AG04450 (cell line): ENCODE measurements at regions of chr22 and their contacts with region 1.

Region 1: GRCh38 chr22:28442264-28442710 is 237.4 kb downstream of the TTC28 start:
- DNase-seq: no peak
- H3K4me3 ChIP-seq: peak overlapping the region; percentile 65
- H3K27ac ChIP-seq: peak overlapping the region; percentile 81
- H3K27me3 ChIP-seq: no peaks in the 10 kb centered on the region
- CTCF ChIP-seq: peak; percentile 81

Region 2: DNA sequence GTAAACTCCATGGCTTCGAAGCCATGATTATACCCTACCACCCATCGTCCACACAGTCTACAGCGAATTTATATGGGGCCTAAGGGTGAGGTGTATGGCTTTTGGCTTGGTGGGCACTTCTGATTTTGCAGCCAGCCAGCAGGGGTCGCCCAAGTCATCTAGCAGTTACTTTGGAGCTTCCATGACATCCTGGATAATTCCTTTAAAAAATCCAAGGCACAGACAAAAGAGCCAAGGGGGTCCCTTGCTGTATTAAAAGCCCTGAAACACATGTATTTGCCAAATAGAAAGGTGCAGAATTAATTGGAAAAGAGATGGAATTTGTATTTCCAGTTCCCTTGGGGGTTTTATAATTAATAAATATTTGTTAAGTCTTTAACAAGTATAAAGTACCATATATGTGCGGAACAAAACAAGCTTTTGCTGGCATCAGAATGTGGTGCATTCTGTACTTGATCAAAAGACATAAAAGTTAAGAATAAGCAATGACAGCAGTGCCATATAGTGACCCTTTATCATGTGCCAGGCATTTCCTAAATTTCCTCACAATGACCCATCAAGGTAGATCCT is 390.4 kb before region 1 on chr22:
- CTCF ChIA-PET with region 1: interaction called, 14 read pairs
- POLR2A ChIA-PET with region 1: interaction called, 3 read pairs
- DNase-seq: no peak
- H3K4me3 ChIP-seq: no peak overlapping the region
- H3K27ac ChIP-seq: no peak overlapping the region
- H3K27me3 ChIP-seq: no peaks in the 10 kb centered on the region
- CTCF ChIP-seq: peak; percentile 97

Region 3: DNA sequence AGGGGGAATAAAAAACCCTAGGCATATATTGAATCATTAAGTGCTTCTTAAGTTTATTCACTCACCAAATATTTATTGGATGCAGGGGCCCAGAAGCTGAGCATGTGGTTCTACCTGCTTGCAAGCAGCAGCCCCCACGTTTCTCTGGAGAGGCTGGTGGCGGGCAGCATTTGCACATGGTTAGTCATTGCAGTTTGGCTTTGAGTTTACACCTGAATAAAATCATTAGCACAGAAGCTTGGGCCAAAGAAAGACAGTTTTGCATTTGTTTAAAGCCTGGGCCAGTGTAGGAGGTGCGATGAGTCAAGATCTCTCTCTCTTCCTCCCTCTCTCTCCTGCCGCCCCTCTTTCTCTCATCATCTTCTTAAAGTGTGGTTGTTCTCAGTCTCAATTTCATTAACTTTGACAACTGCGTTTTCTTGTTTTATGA is 546.8 kb after region 1 on chr22:
- CTCF ChIA-PET with region 1: interaction called, 11 read pairs
- POLR2A ChIA-PET with region 1: no interaction called
- DNase-seq: no peak
- H3K4me3 ChIP-seq: no peak overlapping the region
- H3K27ac ChIP-seq: no peak overlapping the region
- H3K27me3 ChIP-seq: no peaks in the 10 kb centered on the region
- CTCF ChIP-seq: no peak

Region 4: DNA sequence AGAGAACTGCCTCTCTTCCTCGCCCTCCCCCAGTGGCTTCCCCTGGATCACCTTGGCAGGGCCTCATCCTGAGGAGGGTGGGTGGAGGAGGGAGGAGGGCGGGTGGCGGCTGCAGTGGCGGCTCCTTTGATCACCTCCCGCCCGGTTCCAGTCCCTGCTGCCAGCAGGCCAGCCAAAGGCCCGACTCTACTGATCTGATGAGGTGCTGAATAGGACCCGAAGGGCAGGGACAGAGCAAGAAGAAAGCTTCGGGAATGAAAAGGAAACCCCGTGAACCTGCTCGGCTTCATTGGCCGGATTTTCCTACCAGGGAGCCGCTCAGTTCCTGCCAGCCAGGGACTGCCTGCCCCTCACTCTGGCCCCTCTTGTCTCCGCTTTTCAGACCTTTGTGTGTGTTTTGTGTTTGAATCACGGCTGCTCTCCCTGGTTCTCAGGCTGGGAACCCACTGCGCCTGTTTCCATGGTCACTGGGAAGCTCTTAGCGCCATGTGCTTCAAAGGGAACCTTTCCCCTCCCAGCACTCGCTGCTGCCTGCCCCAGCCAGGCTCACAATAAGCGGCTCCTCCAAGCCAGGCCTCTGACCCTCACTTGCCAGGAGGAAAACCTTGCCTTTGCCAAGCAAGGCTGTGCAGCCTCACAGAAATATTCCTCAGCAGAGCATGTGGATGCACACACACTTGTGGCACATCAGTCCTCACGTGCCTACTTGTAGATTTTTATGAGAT is 562.5 kb after region 1 on chr22:
- CTCF ChIA-PET with region 1: no interaction called
- POLR2A ChIA-PET with region 1: interaction called, 10 read pairs
- DNase-seq: no peak
- H3K4me3 ChIP-seq: no peak overlapping the region
- H3K27ac ChIP-seq: no peak overlapping the region
- H3K27me3 ChIP-seq: no peaks in the 10 kb centered on the region
- CTCF ChIP-seq: no peak